Caco-2 (cell line): ENCODE measurements at regions of chr18 and their contacts with region 1.

Region 1: GRCh38 chr18:1929720-1930119 is 641.6 kb downstream of the METTL4 start:
- DNase-seq: no peak
- H3K4me3 ChIP-seq: no peak overlapping the region
- H3K4me3 Mint-ChIP-seq: no peak overlapping the region
- H3K27ac Mint-ChIP-seq: no peak overlapping the region
- H3K4me1 ChIP-seq: no peaks in the 10 kb centered on the region
- H3K4me1 Mint-ChIP-seq: no peaks in the 10 kb centered on the region
- H3K27me3 ChIP-seq: no peaks in the 10 kb centered on the region
- H3K27me3 Mint-ChIP-seq: no peaks in the 10 kb centered on the region
- CTCF ChIP-seq: no peak

Region 2: GRCh38 chr18:2002151-2002550 is 72.4 kb after region 1 on chr18:
- CTCF ChIA-PET with region 1: no interaction called
- POLR2A ChIA-PET with region 1: no interaction called
- intact Hi-C with region 1: loop called (anchors 5 kb)
- DNase-seq: peak; percentile 36 to 41
- H3K4me3 ChIP-seq: no peak overlapping the region
- H3K4me3 Mint-ChIP-seq: peak overlapping the region; percentile 56
- H3K27ac Mint-ChIP-seq: peak overlapping the region; percentile 92
- H3K4me1 ChIP-seq: peaks cover 39% of the 10 kb centered on the region
- H3K4me1 Mint-ChIP-seq: peaks cover 44% of the 10 kb centered on the region
- H3K27me3 ChIP-seq: no peaks in the 10 kb centered on the region
- H3K27me3 Mint-ChIP-seq: no peaks in the 10 kb centered on the region
- CTCF ChIP-seq: no peak